Activated CD8-positive, alpha-beta T cell treated with anti-CD3 and anti-CD28 coated beads, Interleukin-2, amount 10 ng/mL, durations not matched to agents 7 days and 5 days (primary cell): ENCODE measurements at regions of chr13 and their contacts with region 1.

Region 1: DNA sequence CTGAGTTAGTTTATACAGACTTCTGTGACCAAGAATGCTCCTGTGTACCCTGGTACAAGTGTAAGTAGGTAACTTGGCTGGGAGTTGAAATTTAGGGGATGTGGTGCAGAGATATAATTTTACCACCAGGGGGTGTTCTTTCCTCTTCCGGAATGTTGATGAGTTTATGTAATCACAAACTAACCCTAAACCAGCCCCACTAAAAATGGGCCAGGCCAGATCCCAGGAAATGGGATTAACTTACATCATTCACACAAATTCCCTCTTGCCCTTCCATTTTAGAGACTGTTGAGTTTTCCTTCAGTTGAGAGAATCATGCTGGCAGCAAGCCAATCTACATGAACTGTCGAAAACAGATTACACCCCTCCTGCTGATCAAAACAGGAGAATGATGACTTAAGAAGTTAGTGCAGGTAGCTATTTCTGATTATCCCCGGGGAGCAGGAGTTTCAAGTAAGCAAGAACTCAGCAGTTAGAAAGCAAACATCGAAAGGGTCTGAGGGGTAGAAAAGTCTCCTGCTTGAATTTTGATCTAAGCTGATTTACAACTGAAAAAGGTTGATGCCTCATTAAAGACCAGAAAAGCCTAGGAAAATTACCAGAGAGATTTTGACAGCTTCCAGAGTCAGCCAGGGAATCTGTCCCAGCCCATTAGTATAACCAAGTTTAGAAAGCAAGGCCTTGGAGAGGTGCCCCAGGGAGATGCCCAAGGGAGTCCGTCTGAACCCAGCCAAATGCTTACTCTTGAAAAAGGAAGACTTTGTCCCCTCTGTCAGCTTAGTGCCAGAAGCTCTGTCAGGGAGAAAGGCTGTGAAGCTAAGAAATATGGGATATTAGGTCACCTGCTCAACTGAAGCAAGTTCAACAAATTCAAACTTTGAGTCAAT is 32.3 kb upstream of the MED4 start:
- DNase-seq: peak; percentile 46
- ATAC-seq: peak; percentile 89
- H3K4me3 Mint-ChIP-seq: no peak overlapping the region
- H3K27ac Mint-ChIP-seq: peak overlapping the region; percentile 50
- H3K4me1 Mint-ChIP-seq: peaks cover 15% of the 10 kb centered on the region
- H3K27me3 Mint-ChIP-seq: no peaks in the 10 kb centered on the region

Region 2: GRCh38 chr13:47865883-47866282 is 261.3 kb before region 1 on chr13:
- CTCF ChIA-PET with region 1: no interaction called
- POLR2A ChIA-PET with region 1: no interaction called
- DNase-seq: no peak
- ATAC-seq: no peak
- H3K4me3 Mint-ChIP-seq: no peak overlapping the region
- H3K27ac Mint-ChIP-seq: no peak overlapping the region
- H3K4me1 Mint-ChIP-seq: no peaks in the 10 kb centered on the region
- H3K27me3 Mint-ChIP-seq: peaks cover 16% of the 10 kb centered on the region

Region 3: DNA sequence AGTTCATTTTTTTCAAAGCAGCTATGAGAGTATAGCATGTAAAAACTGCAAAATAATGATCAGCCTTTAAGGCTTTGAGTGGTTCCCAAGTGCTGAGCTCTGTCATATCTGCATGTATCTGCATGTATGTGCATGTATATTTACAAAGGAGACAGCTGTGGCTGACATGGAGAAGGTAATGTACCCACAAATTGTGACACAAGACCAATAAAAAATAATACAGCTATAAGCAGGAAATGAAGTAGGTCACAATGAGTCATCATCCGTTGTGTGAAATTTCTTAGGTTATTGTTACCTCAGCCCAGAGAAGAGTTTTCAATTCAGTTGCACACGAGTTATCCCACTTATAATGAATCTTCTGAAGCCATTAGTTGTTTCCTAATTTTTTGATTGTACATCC is 28.7 kb after region 1 on chr13:
- CTCF ChIA-PET with region 1: interaction called, 13 read pairs
- POLR2A ChIA-PET with region 1: no interaction called
- DNase-seq: peak; percentile 58
- ATAC-seq: peak; percentile 87
- H3K4me3 Mint-ChIP-seq: peak overlapping the region; percentile 38
- H3K27ac Mint-ChIP-seq: peak overlapping the region; percentile 92
- H3K4me1 Mint-ChIP-seq: peaks cover 74% of the 10 kb centered on the region
- H3K27me3 Mint-ChIP-seq: no peaks in the 10 kb centered on the region

Region 4: GRCh38 chr13:48222358-48223301 is 95.4 kb after region 1 on chr13:
- CTCF ChIA-PET with region 1: interaction called, 29 read pairs
- POLR2A ChIA-PET with region 1: no interaction called
- DNase-seq: no peak
- ATAC-seq: peak; percentile 17
- H3K4me3 Mint-ChIP-seq: peak overlapping the region; percentile 44
- H3K27ac Mint-ChIP-seq: peak overlapping the region; percentile 67
- H3K4me1 Mint-ChIP-seq: peaks cover 41% of the 10 kb centered on the region
- H3K27me3 Mint-ChIP-seq: peaks cover under 1% of the 10 kb centered on the region

Region 5: DNA sequence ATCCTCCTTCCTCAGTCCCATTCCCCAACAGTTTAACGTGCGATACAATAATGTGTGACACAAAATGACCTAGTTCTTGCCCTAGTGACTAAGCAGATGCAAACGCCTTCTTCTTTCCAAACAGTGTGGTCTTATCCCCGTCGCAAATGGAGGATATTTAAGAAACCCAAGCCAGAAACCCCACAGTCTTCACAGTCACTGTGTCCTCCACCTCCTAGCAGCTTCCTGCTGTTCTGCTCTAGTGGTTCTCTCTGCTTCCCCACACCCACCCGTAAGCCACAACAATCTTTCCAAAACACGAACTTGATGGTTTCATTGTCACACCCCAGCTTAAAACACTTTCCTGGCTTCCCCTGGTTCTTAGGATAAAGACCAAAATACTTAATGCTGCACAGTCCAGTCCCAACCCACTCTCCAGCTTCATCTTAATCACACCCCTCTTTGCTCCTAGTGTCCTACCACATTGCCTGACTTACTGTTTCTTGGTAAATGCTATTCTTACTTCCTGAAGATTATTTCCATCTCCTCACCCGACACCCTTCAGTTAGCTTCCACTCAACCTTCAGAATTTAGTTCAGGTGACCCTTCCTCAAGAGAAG is 138.1 kb after region 1 on chr13:
- CTCF ChIA-PET with region 1: interaction called, 11 read pairs
- POLR2A ChIA-PET with region 1: no interaction called
- DNase-seq: peak; percentile 44
- ATAC-seq: peak; percentile 78
- H3K4me3 Mint-ChIP-seq: peak overlapping the region; percentile 12
- H3K27ac Mint-ChIP-seq: peak overlapping the region; percentile 77
- H3K4me1 Mint-ChIP-seq: peaks cover 24% of the 10 kb centered on the region
- H3K27me3 Mint-ChIP-seq: no peaks in the 10 kb centered on the region

Region 6: GRCh38 chr13:48580185-48580803 is 453.1 kb after region 1 on chr13:
- CTCF ChIA-PET with region 1: interaction called, 14 read pairs
- POLR2A ChIA-PET with region 1: no interaction called
- DNase-seq: peak; percentile 83
- ATAC-seq: peak; percentile 51
- H3K4me3 Mint-ChIP-seq: no peak overlapping the region
- H3K27ac Mint-ChIP-seq: no peak overlapping the region
- H3K4me1 Mint-ChIP-seq: peaks cover 52% of the 10 kb centered on the region
- H3K27me3 Mint-ChIP-seq: peaks cover 27% of the 10 kb centered on the region